Activated CD4-positive, alpha-beta memory T cell treated with anti-CD3 and anti-CD28 coated beads for 36 hours (primary cell): ENCODE measurements at regions of chr2 and their contacts with region 1.

Region 1: DNA sequence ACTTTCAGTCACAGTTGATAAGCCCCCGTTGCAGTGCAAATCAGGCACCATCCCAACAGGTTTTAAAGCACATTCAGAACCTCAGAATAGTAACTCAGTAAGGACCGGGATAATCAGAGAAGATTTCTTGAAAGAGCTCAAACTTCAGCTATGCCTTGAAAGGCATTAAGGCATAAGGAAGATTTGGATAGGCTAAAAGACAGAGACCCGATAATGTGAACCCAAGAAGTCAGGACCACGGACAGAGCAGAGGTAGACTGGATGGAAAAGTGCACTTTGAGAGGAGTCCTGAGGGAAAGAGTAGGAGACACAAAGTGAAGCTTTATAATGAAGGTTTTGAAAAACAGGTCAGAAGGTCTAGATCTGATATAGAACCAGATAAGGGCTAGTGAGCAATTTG is 36.9 kb upstream of the KLF7 start:
- DNase-seq: peak; percentile 32
- H3K4me3 Mint-ChIP-seq: no peak overlapping the region
- H3K27ac Mint-ChIP-seq: no peak overlapping the region
- H3K4me1 Mint-ChIP-seq: no peaks in the 10 kb centered on the region
- H3K27me3 Mint-ChIP-seq: no peaks in the 10 kb centered on the region

Region 2: DNA sequence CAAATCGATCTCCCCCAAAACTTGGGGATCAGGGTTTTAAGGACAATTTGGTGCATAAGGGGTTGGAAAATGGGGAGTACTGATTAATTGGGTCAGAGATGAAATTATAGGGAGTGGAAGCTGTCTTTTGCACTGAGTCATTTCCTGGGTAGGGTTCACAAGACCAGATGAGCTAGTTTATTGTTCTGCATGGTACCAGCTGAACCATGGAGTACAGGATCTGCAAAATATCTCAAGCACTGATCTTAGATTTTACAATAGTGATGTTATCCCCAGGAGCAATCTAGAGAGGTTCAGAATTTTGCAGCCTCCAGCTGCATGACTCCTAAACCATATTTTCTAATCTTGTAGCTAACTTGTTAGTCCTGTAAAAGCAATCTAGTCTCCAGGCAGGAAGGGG is 190.2 kb before region 1 on chr2:
- CTCF ChIA-PET with region 1: no interaction called
- POLR2A ChIA-PET with region 1: no interaction called
- intact Hi-C with region 1: no loop called
- DNase-seq: no peak
- H3K4me3 Mint-ChIP-seq: no peak overlapping the region
- H3K27ac Mint-ChIP-seq: no peak overlapping the region
- H3K4me1 Mint-ChIP-seq: no peaks in the 10 kb centered on the region
- H3K27me3 Mint-ChIP-seq: peaks cover 2% of the 10 kb centered on the region

Region 3: GRCh38 chr2:207188626-207189419 is 13.8 kb before region 1 on chr2:
- CTCF ChIA-PET with region 1: interaction called, 4 read pairs
- POLR2A ChIA-PET with region 1: no interaction called
- intact Hi-C with region 1: loop called (anchors 2 kb)
- DNase-seq: no peak
- H3K4me3 Mint-ChIP-seq: no peak overlapping the region
- H3K27ac Mint-ChIP-seq: no peak overlapping the region
- H3K4me1 Mint-ChIP-seq: peaks cover 7% of the 10 kb centered on the region
- H3K27me3 Mint-ChIP-seq: peaks cover 5% of the 10 kb centered on the region

Region 4: DNA sequence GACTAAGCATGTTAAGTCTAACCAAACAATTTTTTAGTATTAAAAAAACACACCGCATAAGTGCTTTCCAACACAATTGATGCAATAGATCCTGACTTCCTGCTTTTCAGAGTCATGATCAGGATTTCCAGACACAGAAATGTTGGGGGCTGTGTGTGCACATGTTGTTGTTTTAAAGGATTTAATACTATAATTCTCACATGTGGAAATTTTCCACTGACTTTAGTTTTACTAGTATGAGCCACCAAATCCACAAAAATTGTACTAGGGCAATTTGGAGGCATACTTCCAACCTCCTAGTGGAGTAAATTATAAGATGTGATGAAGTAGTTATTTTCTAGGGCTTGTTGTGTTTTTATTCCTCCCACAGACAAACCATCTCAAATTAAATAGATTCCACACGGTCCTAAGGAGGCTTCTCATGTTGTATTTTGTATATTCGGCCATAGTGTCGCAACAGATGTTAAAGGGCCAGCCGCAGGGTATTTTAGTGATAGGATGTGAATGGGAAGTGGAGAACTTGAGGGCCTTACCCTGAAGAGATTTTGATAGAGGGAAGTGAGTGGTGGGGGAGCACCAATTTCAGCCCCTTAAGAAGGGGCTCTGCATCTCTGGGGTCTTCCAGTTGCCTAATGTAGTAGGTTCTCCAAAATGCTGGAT is 72.0 kb after region 1 on chr2:
- CTCF ChIA-PET with region 1: no interaction called
- POLR2A ChIA-PET with region 1: no interaction called
- intact Hi-C with region 1: no loop called
- DNase-seq: no peak
- H3K4me3 Mint-ChIP-seq: no peak overlapping the region
- H3K27ac Mint-ChIP-seq: no peak overlapping the region
- H3K4me1 Mint-ChIP-seq: peaks cover 9% of the 10 kb centered on the region
- H3K27me3 Mint-ChIP-seq: no peaks in the 10 kb centered on the region